HepG2 (cell line): ENCODE measurements at regions of chr17 and their contacts with region 1.

Region 1: DNA sequence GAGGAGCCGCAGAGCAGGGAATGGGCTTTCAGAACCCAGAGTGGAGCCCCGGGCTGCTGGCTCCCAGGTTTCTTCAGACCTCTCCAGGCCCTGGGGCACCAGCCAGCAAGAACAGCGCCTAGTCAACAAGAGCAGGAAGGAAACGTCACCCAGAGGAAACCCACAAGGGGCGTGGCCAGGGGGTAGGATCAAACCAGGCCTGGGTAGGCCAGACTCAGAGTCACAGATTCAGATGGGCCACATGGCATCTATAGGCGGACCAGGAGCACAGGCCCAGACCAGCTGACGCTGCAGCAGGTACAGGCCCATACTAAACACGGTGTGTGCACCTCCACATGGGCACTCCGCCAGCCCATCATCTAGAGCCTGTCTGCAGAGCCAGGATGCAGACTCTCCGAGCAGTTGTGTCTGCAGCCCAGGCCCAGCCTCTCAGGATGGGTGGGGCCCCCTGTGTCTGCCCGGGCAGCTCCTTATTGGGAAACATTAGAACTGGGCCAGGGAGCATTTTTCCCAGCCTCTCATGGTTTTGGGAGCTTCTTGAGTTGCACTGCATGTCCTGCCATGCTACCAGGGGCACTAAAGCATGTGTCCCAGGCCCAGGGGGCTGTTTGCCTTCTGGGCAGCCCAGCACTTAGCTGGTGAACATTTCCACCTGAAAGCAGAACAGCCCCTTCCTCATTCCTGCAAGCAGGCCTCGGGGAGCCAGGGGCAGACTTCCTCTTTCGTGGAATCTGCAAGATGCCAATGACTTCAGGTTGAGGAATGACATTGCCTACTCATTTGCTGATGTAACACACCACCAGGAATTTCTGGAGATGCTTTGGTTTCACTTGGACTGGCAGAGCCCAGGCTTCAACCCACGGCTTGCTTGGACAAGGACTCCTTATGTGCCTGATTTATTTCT is at the start of gene NLRP1:
- DNase-seq: peak; percentile 20
- ATAC-seq: peak; percentile 45
- H3K4me3 ChIP-seq: no peak within 1 kb of the TSS
- H3K27ac ChIP-seq: no peak within 1 kb of the TSS
- H3K4me1 ChIP-seq: no peaks in the 10 kb centered on the region
- H3K27me3 ChIP-seq: no peaks in the 10 kb centered on the region
- CTCF ChIP-seq: no peak
- EP300 ChIP-seq: no peak
- POLR2A ChIP-seq: no peak
- RAD21 ChIP-seq: no peak
- total RNA-seq, gene NLRP1: 3.3 and 3.4 TPM in 2 replicates

Region 2: DNA sequence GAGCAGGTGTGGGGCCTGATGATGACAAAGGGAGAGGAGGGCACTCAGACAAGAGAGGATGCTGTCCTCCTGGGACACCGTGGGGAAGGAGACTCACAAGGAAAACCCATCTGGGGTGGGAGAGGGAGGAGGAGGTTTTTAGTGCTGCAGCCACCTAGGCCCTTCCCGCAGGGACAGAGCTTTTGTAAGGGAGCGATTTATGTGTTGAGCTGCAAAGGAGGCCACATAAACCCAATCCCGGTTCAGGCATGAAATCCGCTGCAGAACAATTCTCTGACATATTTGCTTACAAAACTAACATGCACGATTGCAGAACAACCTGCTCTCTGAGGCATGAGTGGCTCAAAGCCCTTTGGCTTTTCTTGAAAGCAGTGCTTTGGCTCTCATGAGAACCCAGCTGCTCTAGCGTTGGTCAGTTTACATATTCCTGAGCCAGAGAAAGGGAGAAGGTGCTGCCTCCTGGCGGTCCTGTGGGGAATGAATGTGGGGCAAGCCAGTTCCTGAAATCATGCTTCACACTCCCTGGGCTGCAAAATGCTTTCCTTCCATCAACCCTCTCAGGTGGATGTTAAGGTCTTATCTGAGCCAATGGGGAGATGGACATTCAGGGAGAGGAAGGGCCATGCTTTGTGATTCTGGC is 122.1 kb after region 1 on chr17:
- CTCF ChIA-PET with region 1: interaction called, 4 read pairs
- POLR2A ChIA-PET with region 1: no interaction called
- in situ Hi-C with region 1: loop called (anchors 5 kb)
- intact Hi-C with region 1: loop called (anchors 10 kb)
- DNase-seq: peak; percentile 35
- ATAC-seq: peak; percentile 79
- H3K4me3 ChIP-seq: no peak overlapping the region
- H3K27ac ChIP-seq: no peak overlapping the region
- H3K4me1 ChIP-seq: no peaks in the 10 kb centered on the region
- H3K27me3 ChIP-seq: no peaks in the 10 kb centered on the region
- CTCF ChIP-seq: peak; percentile 79
- EP300 ChIP-seq: no peak
- POLR2A ChIP-seq: no peak
- RAD21 ChIP-seq: no peak

Region 3: DNA sequence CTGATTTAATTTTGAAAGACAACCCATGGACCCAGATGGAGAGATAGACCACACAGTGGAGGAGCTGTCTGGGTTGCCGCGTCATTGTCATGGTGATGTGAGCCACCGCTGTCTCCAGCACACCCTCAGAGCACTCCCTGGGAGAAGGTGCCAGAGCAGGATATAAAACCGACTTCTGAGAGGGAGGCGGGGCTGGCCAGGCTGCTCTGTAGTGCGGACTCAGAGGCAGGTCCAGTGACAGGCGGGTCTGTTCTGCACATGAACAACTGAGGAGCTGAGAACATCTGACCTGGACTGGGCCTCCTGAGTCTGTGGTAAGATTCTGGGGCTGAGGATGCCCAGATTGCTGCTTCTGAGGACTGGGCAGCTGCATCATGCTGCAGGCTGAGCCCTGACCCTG is 216.0 kb after region 1 on chr17:
- CTCF ChIA-PET with region 1: interaction called, 4 read pairs
- POLR2A ChIA-PET with region 1: no interaction called
- in situ Hi-C with region 1: no loop called
- intact Hi-C with region 1: loop called (anchors 5 kb)
- DNase-seq: no peak
- ATAC-seq: no peak
- H3K4me3 ChIP-seq: no peak overlapping the region
- H3K27ac ChIP-seq: no peak overlapping the region
- H3K4me1 ChIP-seq: no peaks in the 10 kb centered on the region
- H3K27me3 ChIP-seq: no peaks in the 10 kb centered on the region; a peak in 1 of 5 replicates
- CTCF ChIP-seq: no peak
- EP300 ChIP-seq: no peak
- POLR2A ChIP-seq: no peak
- RAD21 ChIP-seq: no peak

Region 4: DNA sequence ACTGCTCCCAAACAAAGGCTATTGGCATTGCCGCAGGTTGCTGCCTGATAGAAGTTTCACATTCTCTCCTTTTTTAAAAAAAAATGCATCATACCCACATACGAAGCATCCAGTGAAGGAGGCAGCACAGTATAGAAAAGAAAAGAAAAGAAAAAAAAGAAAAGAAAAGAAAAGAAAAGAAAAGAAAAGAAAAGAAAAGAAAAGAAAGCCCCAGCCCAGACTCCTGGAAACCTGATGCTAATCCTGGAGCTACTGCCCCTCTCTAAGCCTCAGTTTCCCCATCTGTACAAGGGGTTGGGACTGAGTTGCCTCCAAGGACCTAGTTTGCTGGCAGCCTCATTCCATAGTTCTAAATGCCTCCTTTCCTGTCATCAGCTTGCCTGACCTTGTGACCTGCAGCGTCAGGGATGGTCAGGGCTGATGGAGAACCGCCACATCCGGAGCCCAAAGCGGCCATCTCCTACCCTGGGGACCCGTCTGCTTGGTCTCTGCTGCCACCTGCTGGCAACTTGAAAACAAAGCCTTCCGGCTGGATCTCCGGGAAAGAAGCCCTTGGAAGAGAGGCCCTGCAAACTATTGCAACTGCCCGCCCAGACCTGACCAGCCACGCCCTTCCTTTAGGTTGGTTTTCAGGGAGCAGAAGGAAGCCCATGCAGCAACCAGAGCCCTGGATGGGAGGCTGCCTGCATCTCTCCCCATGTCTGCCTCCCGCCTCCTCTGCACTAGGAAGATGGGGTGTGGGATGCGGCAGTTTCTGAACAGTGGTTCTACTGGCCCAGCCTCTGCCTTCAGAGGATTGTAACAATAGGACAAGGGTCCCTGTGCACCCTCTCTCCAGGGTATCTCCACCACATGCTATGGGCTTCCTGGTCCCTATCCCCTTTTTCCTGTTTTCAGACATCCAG is 837.3 kb after region 1 on chr17:
- CTCF ChIA-PET with region 1: interaction called, 56 read pairs
- POLR2A ChIA-PET with region 1: no interaction called
- in situ Hi-C with region 1: loop called (anchors 5 kb)
- intact Hi-C with region 1: loop called (anchors 1 kb)
- DNase-seq: peak; percentile 66
- ATAC-seq: peak; percentile 85
- H3K4me3 ChIP-seq: no peak overlapping the region
- H3K27ac ChIP-seq: no peak overlapping the region
- H3K4me1 ChIP-seq: no peaks in the 10 kb centered on the region
- H3K27me3 ChIP-seq: peaks cover 0 to 19% of the 10 kb centered on the region in 2 experiments; a peak in 3 of 5 replicates
- CTCF ChIP-seq: peak; percentile 95
- EP300 ChIP-seq: no peak
- POLR2A ChIP-seq: no peak
- RAD21 ChIP-seq: peak; percentile 92

Region 5: DNA sequence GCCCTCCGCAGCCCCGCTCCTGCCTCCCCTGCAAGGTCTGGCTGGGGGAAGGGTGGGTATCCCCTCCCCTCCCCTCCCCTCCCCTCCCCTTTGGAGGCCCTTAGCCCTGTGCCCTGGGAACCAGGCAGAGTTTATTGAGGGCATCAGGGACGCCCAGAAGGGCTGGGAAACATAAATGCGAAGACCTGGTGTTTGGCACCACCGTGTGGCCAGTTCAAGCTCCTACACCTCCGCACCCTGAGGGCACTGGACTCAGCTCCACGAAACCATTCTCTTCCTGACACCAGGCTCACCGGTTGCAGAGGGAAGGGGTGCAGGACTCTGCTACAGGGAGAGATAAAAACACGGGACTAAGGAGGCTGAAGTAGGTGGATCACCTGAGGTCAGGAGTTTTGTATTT is 851.3 kb after region 1 on chr17:
- CTCF ChIA-PET with region 1: interaction called, 5 read pairs
- POLR2A ChIA-PET with region 1: no interaction called
- in situ Hi-C with region 1: no loop called
- intact Hi-C with region 1: loop called (anchors 5 kb)
- DNase-seq: peak; percentile 34
- ATAC-seq: peak; percentile 95
- H3K4me3 ChIP-seq: no peak overlapping the region
- H3K27ac ChIP-seq: no peak overlapping the region
- H3K4me1 ChIP-seq: peaks cover 18% of the 10 kb centered on the region
- H3K27me3 ChIP-seq: peaks cover 2 to 7% of the 10 kb centered on the region in 2 experiments; a peak in 2 of 5 replicates
- CTCF ChIP-seq: peak; percentile 87
- EP300 ChIP-seq: no peak
- POLR2A ChIP-seq: no peak
- RAD21 ChIP-seq: peak; percentile 43; the same call in 1 of the 2 replicates